CD4-positive, alpha-beta T cell (primary cell): ENCODE measurements at regions of chrX and their contacts with region 1.

Region 1: GRCh38 chrX:16870095-16870860 is at the start of gene RBBP7:
- DNase-seq: peak; percentile 81 to 96 (median 90)
- ATAC-seq: peak; percentile 81
- H3K4me3 ChIP-seq: peak within 1 kb of the TSS; percentile 82
- H3K4me3 Mint-ChIP-seq: peak within 1 kb of the TSS; percentile 99
- H3K27ac ChIP-seq: peak within 1 kb of the TSS; percentile 83 to 95
- H3K27ac Mint-ChIP-seq: peak within 1 kb of the TSS; percentile 99
- H3K4me1 ChIP-seq: peaks cover 16% of the 10 kb centered on the region
- H3K4me1 Mint-ChIP-seq: peaks cover 38% of the 10 kb centered on the region
- H3K27me3 ChIP-seq: no peaks in the 10 kb centered on the region
- H3K27me3 Mint-ChIP-seq: no peaks in the 10 kb centered on the region
- CTCF ChIP-seq: no peak
- total RNA-seq, gene RBBP7: 104 to 110 TPM

Region 2: GRCh38 chrX:14872851-14873675 is 1997.2 kb before region 1 on chrX and contains the starts of genes FANCB and MOSPD2:
- CTCF ChIA-PET with region 1: no interaction called
- POLR2A ChIA-PET with region 1: no interaction called
- intact Hi-C with region 1: loop called in 1 of 2 experiments (anchors 10 kb)
- DNase-seq: peak; percentile 82 to 97 (median 92)
- ATAC-seq: peak; percentile 89
- H3K4me3 ChIP-seq: peak within 1 kb of the TSS; percentile 85
- H3K4me3 Mint-ChIP-seq: peak within 1 kb of the TSS; percentile 93
- H3K27ac ChIP-seq: peak within 1 kb of the TSS; percentile 71 to 72
- H3K27ac Mint-ChIP-seq: peak within 1 kb of the TSS; percentile 91
- H3K4me1 ChIP-seq: peaks cover 7% of the 10 kb centered on the region
- H3K4me1 Mint-ChIP-seq: peaks cover 8% of the 10 kb centered on the region
- H3K27me3 ChIP-seq: no peaks in the 10 kb centered on the region
- H3K27me3 Mint-ChIP-seq: no peaks in the 10 kb centered on the region
- CTCF ChIP-seq: no peak
- total RNA-seq, gene FANCB: 1.5 to 1.6 TPM
- total RNA-seq, gene MOSPD2: 6.4 to 6.8 TPM

Region 3: DNA sequence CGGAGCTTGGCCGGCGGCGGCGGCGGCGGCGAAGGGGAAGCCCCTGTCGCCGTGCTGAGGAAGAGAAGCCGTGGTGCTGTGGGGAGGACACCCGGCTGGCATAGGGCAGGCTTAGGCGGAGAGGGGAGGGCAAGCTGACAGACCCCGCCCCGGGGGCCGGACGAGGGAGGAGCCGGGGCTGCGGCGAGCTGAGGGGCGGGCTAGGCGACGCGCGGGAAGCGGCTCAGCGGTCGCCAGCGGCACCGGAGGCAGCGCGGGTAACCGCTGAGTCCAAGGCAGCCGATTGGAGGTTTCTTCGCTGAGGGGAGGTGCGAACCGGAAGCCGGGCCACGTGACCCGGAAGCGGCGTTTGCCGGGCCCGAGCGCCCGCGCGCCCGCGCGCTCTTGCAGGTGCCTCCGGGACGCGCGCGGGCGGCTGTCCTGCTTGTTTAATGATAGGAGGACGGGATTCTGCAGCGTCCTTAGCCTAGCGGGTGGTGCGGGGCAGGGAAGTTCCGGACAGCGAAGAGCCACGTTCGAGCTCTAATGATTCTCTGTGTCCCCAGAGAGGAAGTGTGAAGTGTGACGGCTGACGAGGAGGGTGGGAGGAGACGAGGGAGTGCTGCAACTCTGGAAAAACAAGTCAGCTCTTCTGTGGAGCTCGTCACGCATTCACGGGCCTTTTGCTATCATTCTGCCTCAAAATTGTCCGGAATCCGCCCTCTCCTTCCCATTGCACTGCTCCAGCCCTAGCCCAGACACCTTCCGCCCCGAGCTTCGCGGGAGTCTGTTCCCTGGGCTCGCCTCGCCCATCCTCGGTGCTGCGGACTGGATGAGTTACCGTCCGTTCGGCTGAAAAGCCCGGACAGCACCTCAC is 1015.3 kb before region 1 on chrX and contains the start of gene AP1S2:
- CTCF ChIA-PET with region 1: no interaction called
- POLR2A ChIA-PET with region 1: interaction called, 3 read pairs
- intact Hi-C with region 1: loop called in 1 of 2 experiments (anchors 10 kb)
- DNase-seq: peak; percentile 84 to 99 (median 94)
- ATAC-seq: peak; percentile 94
- H3K4me3 ChIP-seq: peak within 1 kb of the TSS; percentile 81
- H3K4me3 Mint-ChIP-seq: peak within 1 kb of the TSS; percentile 97
- H3K27ac ChIP-seq: peak within 1 kb of the TSS; percentile 87 to 89
- H3K27ac Mint-ChIP-seq: peak within 1 kb of the TSS; percentile 100
- H3K4me1 ChIP-seq: peaks cover 5% of the 10 kb centered on the region
- H3K4me1 Mint-ChIP-seq: peaks cover 38% of the 10 kb centered on the region
- H3K27me3 ChIP-seq: no peaks in the 10 kb centered on the region
- H3K27me3 Mint-ChIP-seq: no peaks in the 10 kb centered on the region
- CTCF ChIP-seq: no peak
- total RNA-seq, gene AP1S2: 20.0 to 20.8 TPM

Region 4: GRCh38 chrX:16719334-16720084 is 150.8 kb before region 1 on chrX and contains the start of gene SYAP1:
- CTCF ChIA-PET with region 1: interaction called, 3 read pairs
- POLR2A ChIA-PET with region 1: no interaction called
- intact Hi-C with region 1: loop called in 1 of 2 experiments (anchors 5 kb)
- DNase-seq: peak; percentile 81 to 98 (median 92)
- ATAC-seq: peak; percentile 86
- H3K4me3 ChIP-seq: peak within 1 kb of the TSS; percentile 69
- H3K4me3 Mint-ChIP-seq: peak within 1 kb of the TSS; percentile 97
- H3K27ac ChIP-seq: peak within 1 kb of the TSS; percentile 89 to 96
- H3K27ac Mint-ChIP-seq: peak within 1 kb of the TSS; percentile 100
- H3K4me1 ChIP-seq: peaks cover 20% of the 10 kb centered on the region
- H3K4me1 Mint-ChIP-seq: peaks cover 44% of the 10 kb centered on the region
- H3K27me3 ChIP-seq: no peaks in the 10 kb centered on the region
- H3K27me3 Mint-ChIP-seq: no peaks in the 10 kb centered on the region
- CTCF ChIP-seq: no peak
- total RNA-seq, gene SYAP1: 60.2 to 65.2 TPM

Region 5: GRCh38 chrX:16786139-16786790 is 84.0 kb before region 1 on chrX and contains the start of gene TXLNG:
- CTCF ChIA-PET with region 1: no interaction called
- POLR2A ChIA-PET with region 1: no interaction called
- intact Hi-C with region 1: loop called in 1 of 2 experiments (anchors 5 kb)
- DNase-seq: peak; percentile 85 to 98 (median 94)
- ATAC-seq: peak; percentile 94
- H3K4me3 ChIP-seq: peak within 1 kb of the TSS; percentile 76
- H3K4me3 Mint-ChIP-seq: peak within 1 kb of the TSS; percentile 97
- H3K27ac ChIP-seq: peak within 1 kb of the TSS; percentile 84 to 87
- H3K27ac Mint-ChIP-seq: peak within 1 kb of the TSS; percentile 84
- H3K4me1 ChIP-seq: peaks cover 12% of the 10 kb centered on the region
- H3K4me1 Mint-ChIP-seq: peaks cover 29% of the 10 kb centered on the region
- H3K27me3 ChIP-seq: no peaks in the 10 kb centered on the region
- H3K27me3 Mint-ChIP-seq: no peaks in the 10 kb centered on the region
- CTCF ChIP-seq: no peak
- total RNA-seq, gene TXLNG: 17.2 to 17.5 TPM

Region 6: GRCh38 chrX:16882702-16883486 is 12.6 kb after region 1 on chrX:
- CTCF ChIA-PET with region 1: interaction called, 30 read pairs
- POLR2A ChIA-PET with region 1: interaction called, 23 read pairs
- intact Hi-C with region 1: no loop called
- DNase-seq: peak; percentile 38 to 79 (median 62)
- ATAC-seq: peak; percentile 84
- H3K4me3 ChIP-seq: peak overlapping the region; percentile 63
- H3K4me3 Mint-ChIP-seq: peak overlapping the region; percentile 87
- H3K27ac ChIP-seq: peak overlapping the region in 1 of 2 donors; percentile 50
- H3K27ac Mint-ChIP-seq: peak overlapping the region; percentile 81
- H3K4me1 ChIP-seq: peaks cover 12% of the 10 kb centered on the region
- H3K4me1 Mint-ChIP-seq: peaks cover 4% of the 10 kb centered on the region
- H3K27me3 ChIP-seq: peaks cover 0 to 4% of the 10 kb centered on the region in 2 experiments
- H3K27me3 Mint-ChIP-seq: no peaks in the 10 kb centered on the region
- CTCF ChIP-seq: peak; percentile 70

Region 7: GRCh38 chrX:16946361-16946964 is 76.2 kb after region 1 on chrX and contains the start of gene REPS2:
- CTCF ChIA-PET with region 1: no interaction called
- POLR2A ChIA-PET with region 1: no interaction called
- intact Hi-C with region 1: loop called in 1 of 2 experiments (anchors 5 kb)
- DNase-seq: peak; percentile 51 to 90 (median 76)
- ATAC-seq: peak; percentile 97
- H3K4me3 ChIP-seq: peak within 1 kb of the TSS; percentile 59
- H3K4me3 Mint-ChIP-seq: peak within 1 kb of the TSS; percentile 89
- H3K27ac ChIP-seq: no peak within 1 kb of the TSS
- H3K27ac Mint-ChIP-seq: peak within 1 kb of the TSS; percentile 70
- H3K4me1 ChIP-seq: peaks cover 12% of the 10 kb centered on the region
- H3K4me1 Mint-ChIP-seq: no peaks in the 10 kb centered on the region
- H3K27me3 ChIP-seq: no peaks in the 10 kb centered on the region
- H3K27me3 Mint-ChIP-seq: no peaks in the 10 kb centered on the region
- CTCF ChIP-seq: no peak
- total RNA-seq, gene REPS2: 0.53 to 0.60 TPM